ENCODE measurements at regions of chr7 and their contacts with region 1.

Region 1: GRCh38 chr7:106153891-106154449 is 41.9 kb upstream of the SYPL1 start:
- DNase-seq: peak; percentile 45 to 86 (median 72)
- ATAC-seq: peak; percentile 96
- H3K4me3 ChIP-seq: no peak overlapping the region
- H3K4me3 Mint-ChIP-seq: peak overlapping the region; percentile 48
- H3K27ac ChIP-seq: no peak overlapping the region
- H3K27ac Mint-ChIP-seq: no peak overlapping the region
- H3K4me1 ChIP-seq: no peaks in the 10 kb centered on the region
- H3K4me1 Mint-ChIP-seq: peaks cover 4% of the 10 kb centered on the region
- H3K27me3 ChIP-seq: no peaks in the 10 kb centered on the region
- H3K27me3 Mint-ChIP-seq: peaks cover 5% of the 10 kb centered on the region
- CTCF ChIP-seq: peak; percentile 93

Region 2: DNA sequence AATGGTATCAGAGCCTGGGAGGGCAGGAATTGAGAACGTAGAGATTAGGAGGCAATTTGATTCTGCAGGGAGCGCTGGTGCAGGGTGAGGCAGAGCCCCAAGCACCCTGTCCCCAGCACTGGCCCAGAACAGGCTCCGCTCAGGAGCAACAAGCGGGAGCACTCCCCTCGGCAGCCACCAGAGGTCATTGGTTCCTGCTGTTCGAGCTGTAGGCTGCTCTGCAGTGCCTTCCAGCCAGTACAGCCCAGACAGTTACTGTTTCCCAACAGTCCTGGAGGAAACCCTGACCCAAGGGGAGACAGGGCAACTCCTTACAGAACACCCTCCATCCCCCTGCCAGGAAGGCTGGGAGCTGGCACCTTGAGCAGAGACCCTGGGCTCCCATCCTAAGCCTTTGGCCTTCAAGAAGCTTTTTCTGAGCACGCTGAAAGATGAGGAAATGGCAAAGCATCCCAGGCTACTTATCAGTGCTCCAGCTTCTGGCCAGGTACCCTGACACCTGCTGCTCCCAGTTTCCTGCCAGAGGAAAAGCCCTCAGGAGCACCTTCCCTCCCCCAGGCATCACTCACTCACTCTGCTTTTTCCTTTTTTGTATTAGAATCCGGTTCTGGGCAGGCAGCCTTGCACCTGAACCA is 501.5 kb before region 1 on chr7:
- CTCF ChIA-PET with region 1: interaction called, 4 read pairs
- POLR2A ChIA-PET with region 1: no interaction called
- intact Hi-C with region 1: loop called in 1 of 2 experiments (anchors 5 kb)
- DNase-seq: peak; percentile 34 to 73 (median 70)
- ATAC-seq: peak; percentile 92
- H3K4me3 ChIP-seq: no peak overlapping the region
- H3K4me3 Mint-ChIP-seq: no peak overlapping the region
- H3K27ac ChIP-seq: no peak overlapping the region
- H3K27ac Mint-ChIP-seq: no peak overlapping the region
- H3K4me1 ChIP-seq: no peaks in the 10 kb centered on the region
- H3K4me1 Mint-ChIP-seq: peaks cover 5% of the 10 kb centered on the region
- H3K27me3 ChIP-seq: no peaks in the 10 kb centered on the region
- H3K27me3 Mint-ChIP-seq: no peaks in the 10 kb centered on the region
- CTCF ChIP-seq: peak; percentile 70

Region 3: GRCh38 chr7:106041140-106041717 is 112.7 kb before region 1 on chr7:
- CTCF ChIA-PET with region 1: interaction called, 17 read pairs
- POLR2A ChIA-PET with region 1: interaction called, 3 read pairs
- intact Hi-C with region 1: no loop called
- DNase-seq: peak in 3 of 9 experiments; percentile 40 to 59 (median 51)
- ATAC-seq: peak; percentile 32
- H3K4me3 ChIP-seq: no peak overlapping the region
- H3K4me3 Mint-ChIP-seq: peak overlapping the region; percentile 6
- H3K27ac ChIP-seq: no peak overlapping the region
- H3K27ac Mint-ChIP-seq: peak overlapping the region; percentile 68
- H3K4me1 ChIP-seq: peaks cover 28% of the 10 kb centered on the region
- H3K4me1 Mint-ChIP-seq: peaks cover 39% of the 10 kb centered on the region
- H3K27me3 ChIP-seq: no peaks in the 10 kb centered on the region
- H3K27me3 Mint-ChIP-seq: no peaks in the 10 kb centered on the region
- CTCF ChIP-seq: peak; percentile 61

Region 4: DNA sequence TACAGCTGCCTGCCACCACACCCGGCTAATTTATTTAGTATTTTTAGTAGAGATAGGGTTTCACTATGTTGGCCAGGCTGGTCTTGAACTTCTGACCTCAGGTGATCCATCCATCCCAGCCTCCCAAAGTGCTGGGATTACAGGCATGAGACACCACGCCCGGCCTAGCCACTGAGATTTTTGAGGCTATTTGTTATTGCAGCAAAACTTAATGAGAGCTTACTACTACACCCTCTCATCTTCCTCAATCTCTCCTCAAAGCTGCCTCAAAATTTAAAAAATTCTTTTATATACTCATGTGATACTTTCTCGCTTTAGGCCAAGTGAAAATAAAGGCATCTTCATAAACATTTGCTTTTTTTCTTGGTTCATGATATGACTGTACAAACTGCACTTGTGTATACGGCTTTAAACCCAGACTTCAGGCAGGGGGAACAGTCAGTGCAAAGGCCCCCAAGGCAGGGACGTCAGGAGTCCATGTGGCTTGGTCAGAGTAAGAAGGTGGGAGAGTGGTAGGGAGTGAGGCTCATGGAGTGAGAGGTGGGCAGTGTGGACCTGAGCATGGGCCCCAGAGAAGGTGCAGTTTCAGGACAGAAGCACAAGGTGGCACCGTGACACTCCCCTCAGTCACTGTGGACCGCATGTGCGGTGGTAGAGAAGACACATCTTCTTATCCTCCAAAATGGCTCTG is 97.3 kb before region 1 on chr7:
- CTCF ChIA-PET with region 1: interaction called, 310 read pairs
- POLR2A ChIA-PET with region 1: interaction called, 7 read pairs
- intact Hi-C with region 1: loop called (anchors 1 kb)
- DNase-seq: peak; percentile 32 to 84 (median 71)
- ATAC-seq: peak; percentile 99
- H3K4me3 ChIP-seq: no peak overlapping the region
- H3K4me3 Mint-ChIP-seq: no peak overlapping the region
- H3K27ac ChIP-seq: no peak overlapping the region
- H3K27ac Mint-ChIP-seq: no peak overlapping the region
- H3K4me1 ChIP-seq: peaks cover 19% of the 10 kb centered on the region
- H3K4me1 Mint-ChIP-seq: peaks cover 26% of the 10 kb centered on the region
- H3K27me3 ChIP-seq: no peaks in the 10 kb centered on the region
- H3K27me3 Mint-ChIP-seq: no peaks in the 10 kb centered on the region
- CTCF ChIP-seq: peak; percentile 79

Region 5: DNA sequence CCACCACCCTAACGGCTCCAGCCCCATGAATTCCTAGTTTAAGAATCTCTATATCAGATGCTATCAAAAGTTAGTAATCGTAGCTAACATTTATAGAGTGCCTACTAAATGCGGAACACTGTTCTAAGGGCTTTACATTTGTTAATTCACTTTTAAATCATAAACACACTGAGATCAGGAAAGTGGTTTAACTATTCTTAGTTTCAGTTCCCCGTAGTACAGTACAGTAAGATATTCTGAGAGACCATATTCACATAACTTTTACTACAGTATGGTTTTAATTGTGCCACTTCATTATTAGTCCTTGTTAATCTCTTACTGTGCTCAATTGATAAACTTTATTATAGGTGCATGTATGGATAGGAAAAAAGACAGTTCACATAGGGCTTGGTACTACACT is 64.3 kb before region 1 on chr7:
- CTCF ChIA-PET with region 1: interaction called, 10 read pairs
- POLR2A ChIA-PET with region 1: no interaction called
- intact Hi-C with region 1: no loop called
- DNase-seq: no peak
- ATAC-seq: no peak
- H3K4me3 ChIP-seq: no peak overlapping the region
- H3K4me3 Mint-ChIP-seq: no peak overlapping the region
- H3K27ac ChIP-seq: no peak overlapping the region
- H3K27ac Mint-ChIP-seq: no peak overlapping the region
- H3K4me1 ChIP-seq: no peaks in the 10 kb centered on the region
- H3K4me1 Mint-ChIP-seq: peaks cover 4% of the 10 kb centered on the region
- H3K27me3 ChIP-seq: no peaks in the 10 kb centered on the region
- H3K27me3 Mint-ChIP-seq: no peaks in the 10 kb centered on the region
- CTCF ChIP-seq: no peak

Region 6: GRCh38 chr7:106143711-106144337 is 10.1 kb before region 1 on chr7:
- CTCF ChIA-PET with region 1: interaction called, 16 read pairs
- POLR2A ChIA-PET with region 1: no interaction called
- intact Hi-C with region 1: no loop called
- DNase-seq: no peak
- ATAC-seq: no peak
- H3K4me3 ChIP-seq: no peak overlapping the region
- H3K4me3 Mint-ChIP-seq: no peak overlapping the region
- H3K27ac ChIP-seq: no peak overlapping the region
- H3K27ac Mint-ChIP-seq: no peak overlapping the region
- H3K4me1 ChIP-seq: no peaks in the 10 kb centered on the region
- H3K4me1 Mint-ChIP-seq: no peaks in the 10 kb centered on the region
- H3K27me3 ChIP-seq: no peaks in the 10 kb centered on the region
- H3K27me3 Mint-ChIP-seq: no peaks in the 10 kb centered on the region
- CTCF ChIP-seq: no peak

Region 7: DNA sequence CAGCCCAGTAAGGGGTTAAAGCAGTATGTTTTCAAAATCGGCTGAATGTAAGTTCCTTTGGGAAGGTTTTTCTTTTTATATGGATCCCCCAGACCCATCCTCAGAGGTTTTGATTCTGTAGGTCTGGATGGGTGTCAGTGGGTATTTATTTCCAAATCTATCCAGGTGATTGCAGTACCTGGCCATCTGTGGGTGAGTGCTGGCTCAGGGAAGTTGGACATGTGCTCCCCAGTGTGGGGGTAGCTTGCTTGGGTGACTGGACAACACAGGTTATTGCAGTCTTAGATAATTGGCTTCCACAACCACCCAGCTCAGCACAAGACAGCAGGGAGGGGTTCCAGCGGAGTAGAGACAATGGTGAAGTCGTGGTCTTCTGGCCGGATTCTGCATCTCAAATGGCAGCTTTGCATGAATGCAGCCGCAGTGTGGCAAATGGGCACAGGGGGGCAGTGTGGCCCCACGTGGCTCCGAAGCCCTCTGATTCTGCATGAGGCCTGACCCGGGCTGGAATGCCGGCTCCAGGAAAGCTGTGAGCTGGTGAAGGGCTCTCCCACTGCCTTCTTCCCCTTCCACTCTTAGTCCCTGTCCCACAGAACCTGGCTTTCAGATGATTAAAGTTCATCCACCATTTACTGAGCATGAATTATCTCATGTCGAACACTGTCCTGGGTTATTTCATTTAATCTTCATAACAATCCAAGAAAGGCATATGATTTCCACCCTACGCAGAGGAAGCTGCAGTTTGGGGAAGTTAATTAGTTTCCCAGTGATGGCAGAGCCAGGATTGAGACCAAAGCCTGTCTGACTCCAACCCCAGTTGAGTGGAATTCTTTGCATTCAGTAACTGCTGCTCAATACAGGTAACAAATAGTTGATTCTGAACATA is 22.7 kb after region 1 on chr7:
- CTCF ChIA-PET with region 1: interaction called, 24 read pairs
- POLR2A ChIA-PET with region 1: no interaction called
- intact Hi-C with region 1: no loop called
- DNase-seq: peak; percentile 46 to 81 (median 69)
- ATAC-seq: peak; percentile 79
- H3K4me3 ChIP-seq: no peak overlapping the region
- H3K4me3 Mint-ChIP-seq: no peak overlapping the region
- H3K27ac ChIP-seq: no peak overlapping the region
- H3K27ac Mint-ChIP-seq: no peak overlapping the region
- H3K4me1 ChIP-seq: no peaks in the 10 kb centered on the region
- H3K4me1 Mint-ChIP-seq: peaks cover 2% of the 10 kb centered on the region
- H3K27me3 ChIP-seq: peaks cover 2 to 4% of the 10 kb centered on the region in 2 experiments
- H3K27me3 Mint-ChIP-seq: peaks cover 10% of the 10 kb centered on the region
- CTCF ChIP-seq: peak; percentile 85

Region 8: DNA sequence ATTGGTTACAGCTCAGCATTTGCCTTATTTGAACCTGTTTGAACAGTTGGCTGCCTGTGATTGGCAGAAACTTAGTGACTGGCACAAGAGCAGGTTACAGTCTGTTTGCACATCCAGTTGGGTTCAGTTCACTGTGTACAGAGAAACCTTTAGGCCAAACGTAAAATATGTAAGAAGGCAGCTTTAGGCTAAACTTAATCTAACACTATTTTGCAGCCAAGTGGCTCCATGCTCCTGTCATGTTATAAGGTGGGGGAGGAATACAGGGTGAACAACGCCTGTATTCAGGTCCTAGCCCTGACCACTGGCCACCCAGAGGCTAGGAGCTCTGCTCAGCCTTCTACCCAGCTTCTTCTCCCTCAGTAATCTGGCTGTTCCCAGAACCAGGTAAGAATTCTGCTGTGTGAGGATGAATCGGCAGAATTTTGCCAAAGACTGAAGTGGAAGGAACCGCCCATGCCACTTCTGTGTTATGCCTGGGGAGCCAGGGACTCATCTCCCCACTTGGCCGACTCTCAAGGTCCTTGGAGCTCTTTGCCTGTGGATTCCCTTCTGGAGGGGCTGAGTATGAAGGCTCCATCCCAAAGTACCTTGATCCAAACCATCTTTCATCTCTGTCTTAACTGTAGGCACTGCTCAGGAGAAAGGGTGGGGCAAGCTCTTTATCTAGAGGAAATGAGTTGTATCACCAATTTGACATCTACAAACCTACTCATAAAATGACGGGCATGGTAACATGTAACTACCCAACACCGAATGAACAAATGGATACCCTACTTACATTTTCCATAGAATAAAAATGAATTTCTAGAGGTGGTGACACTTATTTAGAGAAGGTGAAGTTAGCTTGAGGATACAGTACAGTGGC is 295.3 kb after region 1 on chr7:
- CTCF ChIA-PET with region 1: no interaction called
- POLR2A ChIA-PET with region 1: no interaction called
- intact Hi-C with region 1: no loop called
- DNase-seq: no peak
- ATAC-seq: no peak
- H3K4me3 ChIP-seq: no peak overlapping the region
- H3K4me3 Mint-ChIP-seq: no peak overlapping the region
- H3K27ac ChIP-seq: no peak overlapping the region
- H3K27ac Mint-ChIP-seq: no peak overlapping the region
- H3K4me1 ChIP-seq: no peaks in the 10 kb centered on the region
- H3K4me1 Mint-ChIP-seq: no peaks in the 10 kb centered on the region
- H3K27me3 ChIP-seq: no peaks in the 10 kb centered on the region
- H3K27me3 Mint-ChIP-seq: peaks cover 25% of the 10 kb centered on the region
- CTCF ChIP-seq: no peak